ENCODE measurements at regions of chr12 and their contacts with region 1.

Region 1: GRCh38 chr12:123305136-123305535 is 33.5 kb upstream of the CDK2AP1 start:
- DNase-seq: no peak
- ATAC-seq: no peak
- H3K4me3 ChIP-seq: no peak overlapping the region
- H3K27ac ChIP-seq: no peak overlapping the region
- H3K4me1 ChIP-seq: no peaks in the 10 kb centered on the region
- H3K27me3 ChIP-seq: no peaks in the 10 kb centered on the region
- CTCF ChIP-seq: no peak
- POLR2A ChIP-seq: no peak
- RAD21 ChIP-seq: no peak

Region 2: DNA sequence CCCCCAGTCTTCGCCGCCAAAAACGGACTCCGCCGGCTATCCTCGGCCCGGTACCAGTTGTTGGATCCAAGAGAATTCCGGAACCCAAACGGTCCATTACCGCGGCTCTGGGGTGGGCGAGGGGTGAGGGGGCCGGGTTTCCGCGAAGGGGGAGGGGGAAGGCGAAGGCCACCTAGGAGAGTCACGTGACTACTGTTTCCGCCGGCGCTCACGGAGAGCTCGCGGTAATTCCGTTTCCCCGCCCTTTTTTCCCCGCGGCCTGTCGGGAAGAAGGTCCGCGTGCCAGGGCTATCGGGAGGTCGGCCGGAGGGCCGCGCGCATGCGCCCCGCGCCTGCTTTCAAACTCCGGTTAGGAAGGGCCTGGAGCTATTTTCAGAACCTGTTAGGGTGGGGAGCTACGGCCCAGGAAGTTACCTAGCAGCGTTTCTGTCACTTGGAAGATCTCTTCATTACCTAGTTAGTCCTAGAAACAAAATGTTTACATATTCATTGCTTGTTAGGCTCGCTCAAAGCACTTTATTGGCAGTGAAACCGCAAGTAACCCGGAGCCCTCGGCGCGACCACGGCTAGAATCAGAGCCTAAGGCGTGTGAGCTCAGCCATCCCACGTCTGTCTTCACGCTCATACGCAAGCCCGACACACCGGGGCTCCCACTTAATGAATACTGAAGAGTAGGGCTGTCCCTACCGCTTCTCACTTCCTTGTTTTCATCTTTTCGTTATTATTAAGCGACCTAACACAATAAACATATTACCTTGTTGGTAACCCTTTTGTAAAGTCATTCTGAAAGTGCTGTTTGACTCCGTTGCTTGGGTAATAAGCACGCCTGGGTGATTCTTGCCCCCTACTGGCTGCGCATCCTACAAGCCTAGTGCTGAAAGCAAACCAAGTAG is 60.1 kb after region 1 on chr12:
- CTCF ChIA-PET with region 1: no interaction called
- POLR2A ChIA-PET with region 1: interaction called, 21 read pairs
- dilution Hi-C with region 1: no loop called
- in situ Hi-C with region 1: no loop called
- intact Hi-C with region 1: no loop called
- DNase-seq: peak; percentile 98
- ATAC-seq: peak; percentile 79
- H3K4me3 ChIP-seq: peak overlapping the region; percentile 84
- H3K27ac ChIP-seq: peak overlapping the region; percentile 100
- H3K4me1 ChIP-seq: no peaks in the 10 kb centered on the region
- H3K27me3 ChIP-seq: no peaks in the 10 kb centered on the region
- CTCF ChIP-seq: peak; percentile 80
- POLR2A ChIP-seq: peak; percentile 45
- RAD21 ChIP-seq: peak; percentile 55

Region 3: DNA sequence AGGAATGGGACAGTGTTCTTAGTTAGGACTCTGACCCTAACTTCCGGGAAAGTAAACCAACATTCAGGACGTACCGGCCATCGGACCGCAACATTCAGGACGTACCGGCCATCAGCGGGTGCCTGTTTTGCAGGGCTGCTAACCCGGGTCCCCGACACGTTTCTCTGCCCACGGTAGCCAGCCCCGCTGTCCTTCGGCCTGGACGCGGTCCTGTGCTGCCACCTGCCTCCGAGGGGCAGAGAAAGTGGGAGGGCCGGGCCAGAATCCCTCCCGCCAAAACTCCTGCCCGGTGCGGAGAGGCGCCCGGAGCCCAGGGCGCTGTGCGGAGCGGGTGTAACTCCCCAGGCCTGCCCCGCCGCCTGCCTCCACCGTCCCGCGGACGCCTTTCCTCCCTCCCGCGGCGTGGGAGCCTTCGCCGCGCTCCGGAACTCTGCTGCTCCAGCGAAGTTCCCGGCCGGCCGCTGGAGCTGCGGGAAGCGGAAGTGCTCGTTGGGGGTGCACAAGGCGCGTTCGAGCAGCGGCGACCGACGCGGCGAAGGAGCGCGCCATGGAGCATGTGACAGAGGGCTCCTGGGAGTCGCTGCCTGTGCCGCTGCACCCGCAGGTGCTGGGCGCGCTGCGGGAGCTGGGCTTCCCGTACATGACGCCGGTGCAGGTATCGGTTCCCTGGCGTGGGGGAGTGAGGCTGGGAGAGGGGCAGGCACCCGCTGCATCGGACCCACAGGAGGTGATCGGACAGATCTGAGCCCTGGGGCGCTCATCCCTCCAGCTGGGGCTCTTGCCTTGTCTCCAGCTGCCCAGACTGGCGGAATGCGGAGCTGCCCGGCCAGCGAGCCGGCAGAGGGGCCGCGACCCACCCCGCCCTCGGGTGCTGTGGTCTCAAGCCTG is 296.7 kb after region 1 on chr12 and contains the start of gene DDX55:
- CTCF ChIA-PET with region 1: no interaction called
- POLR2A ChIA-PET with region 1: interaction called, 3 read pairs
- dilution Hi-C with region 1: no loop called
- in situ Hi-C with region 1: loop called (anchors 25 kb)
- intact Hi-C with region 1: no loop called
- DNase-seq: peak; percentile 79
- ATAC-seq: peak; percentile 96
- H3K4me3 ChIP-seq: peak within 1 kb of the TSS; percentile 88
- H3K27ac ChIP-seq: peak within 1 kb of the TSS; percentile 82
- H3K4me1 ChIP-seq: peaks cover 4% of the 10 kb centered on the region; the same call in 1 of the 2 replicates
- H3K27me3 ChIP-seq: no peaks in the 10 kb centered on the region
- CTCF ChIP-seq: peak; percentile 43
- POLR2A ChIP-seq: peak; percentile 73
- RAD21 ChIP-seq: peak; percentile 47
- total RNA-seq, gene DDX55: 13.3 and 14.4 TPM in 2 replicates